ENCODE measurements at regions of chr6 and their contacts with region 1.

Region 1: DNA sequence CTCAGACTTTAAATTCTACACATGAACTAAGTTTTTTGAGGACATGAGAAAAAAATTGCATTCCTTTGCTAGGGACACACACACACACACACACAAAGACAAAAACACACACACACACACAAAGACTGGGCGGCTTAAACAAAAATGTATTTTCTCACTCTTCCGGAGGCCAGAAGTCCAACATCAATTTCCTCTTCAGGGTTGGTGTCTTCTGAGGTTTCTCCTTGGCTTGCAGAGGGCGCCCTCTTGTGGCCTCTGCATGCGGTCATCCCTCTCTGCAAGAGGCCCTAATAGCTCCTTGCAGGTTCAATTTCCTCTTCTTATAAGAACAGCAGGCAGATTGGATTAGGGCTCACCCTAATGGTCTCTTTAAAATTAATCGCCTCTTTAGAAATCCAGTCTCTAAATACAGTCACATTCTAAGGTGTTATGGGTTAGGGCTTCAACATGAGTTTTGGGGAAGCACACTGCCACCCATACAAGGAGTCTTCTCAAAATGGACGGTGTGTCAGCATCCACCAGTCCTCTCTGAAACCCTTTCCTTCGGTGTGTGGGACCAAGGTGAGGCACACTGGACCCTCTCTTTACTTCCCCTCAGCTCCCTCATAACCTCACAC is 61.4 kb downstream of the GPR6 start:
- ATAC-seq: peak; percentile 82 to 97 (median 93)
- H3K4me3 ChIP-seq: no peak overlapping the region
- H3K27ac ChIP-seq: no peak overlapping the region
- H3K4me1 ChIP-seq: peaks cover 0 to 2% of the 10 kb centered on the region in 2 donors

Region 2: DNA sequence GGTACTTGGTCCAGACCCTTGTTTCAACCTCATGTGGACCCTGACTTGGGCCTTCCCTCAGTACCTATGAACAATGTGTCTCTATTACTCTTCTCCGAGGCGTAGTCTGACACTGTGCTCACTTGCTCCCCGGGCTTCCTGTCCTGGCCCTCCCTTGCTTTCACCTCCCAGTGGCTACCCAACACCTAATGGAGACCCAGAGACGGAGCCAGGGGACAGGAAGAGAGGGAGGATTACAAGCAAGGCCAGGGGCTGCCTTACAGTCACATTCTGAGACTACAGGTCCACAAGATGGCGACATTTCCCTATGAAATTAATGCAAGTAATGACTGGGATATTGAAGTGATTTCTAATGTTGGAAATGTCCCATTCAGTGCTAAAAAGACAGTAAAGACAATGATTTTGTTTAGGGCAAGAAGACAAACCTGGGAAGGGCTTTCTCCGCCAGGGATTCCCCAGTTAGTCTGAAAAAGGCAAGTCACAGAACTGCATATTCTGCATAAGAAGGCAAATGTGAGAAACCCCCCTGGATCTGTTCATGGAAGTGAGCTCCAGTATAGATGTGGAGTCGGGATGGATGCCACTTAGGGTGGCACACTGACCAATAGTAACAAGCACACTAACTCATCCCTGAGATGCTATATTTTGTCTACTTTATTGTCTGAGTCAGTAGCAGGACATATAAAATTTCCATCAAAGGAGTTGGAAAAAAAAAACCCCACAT is 512.4 kb before region 1 on chr6:
- in situ Hi-C with region 1: loop called in 1 of 9 experiments (anchors 25 kb)
- ATAC-seq: peak; percentile 58 to 96 (median 80)
- H3K4me3 ChIP-seq: no peak overlapping the region
- H3K27ac ChIP-seq: no peak overlapping the region
- H3K4me1 ChIP-seq: no peaks in the 10 kb centered on the region

Region 3: DNA sequence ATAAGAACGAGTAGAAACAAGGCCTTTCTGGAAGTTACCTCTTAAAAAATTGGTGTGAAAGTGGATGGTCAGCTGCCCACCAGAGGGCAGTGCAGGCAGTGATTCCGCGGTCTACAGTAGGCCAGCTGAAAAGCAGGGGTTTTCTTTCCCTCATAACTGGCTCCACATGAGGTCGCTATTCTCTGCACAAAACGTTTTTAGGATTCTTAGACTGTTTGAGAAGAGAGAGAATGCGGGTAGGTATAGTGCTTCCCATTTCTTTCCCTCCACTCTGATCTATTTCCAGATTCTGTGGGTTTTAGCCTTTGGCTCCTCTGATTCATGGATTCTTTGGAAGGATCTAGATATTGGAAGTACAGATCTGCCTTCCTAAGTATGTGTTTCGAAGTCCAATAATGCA is 334.2 kb before region 1 on chr6:
- in situ Hi-C with region 1: loop called in 7 of 9 experiments (anchors 5 to 25 kb)
- ATAC-seq: peak; percentile 95 to 100 (median 98)
- H3K4me3 ChIP-seq: no peak overlapping the region
- H3K27ac ChIP-seq: no peak overlapping the region
- H3K4me1 ChIP-seq: no peaks in the 10 kb centered on the region

Region 4: DNA sequence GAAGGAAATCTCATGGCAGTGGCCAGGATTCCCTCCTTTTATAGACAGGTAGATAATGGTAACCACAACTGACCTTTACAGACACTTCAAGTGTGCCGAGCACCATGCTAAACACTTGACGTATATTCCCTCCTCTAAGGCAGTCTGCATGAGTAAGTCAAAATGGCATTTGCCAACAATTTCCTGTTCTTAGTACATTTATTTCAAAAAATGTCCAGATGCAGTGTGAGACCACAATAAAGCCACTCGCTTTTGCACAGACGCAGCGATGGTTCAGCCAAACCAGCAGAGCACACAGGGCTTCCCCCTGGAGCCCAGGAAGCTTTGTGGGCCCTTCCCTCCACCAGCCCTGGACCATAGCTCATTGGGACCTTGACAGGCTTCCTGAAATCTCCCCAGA is 77.8 kb before region 1 on chr6:
- in situ Hi-C with region 1: no loop called
- ATAC-seq: no peak
- H3K4me3 ChIP-seq: no peak overlapping the region
- H3K27ac ChIP-seq: no peak overlapping the region
- H3K4me1 ChIP-seq: no peaks in the 10 kb centered on the region

Region 5: DNA sequence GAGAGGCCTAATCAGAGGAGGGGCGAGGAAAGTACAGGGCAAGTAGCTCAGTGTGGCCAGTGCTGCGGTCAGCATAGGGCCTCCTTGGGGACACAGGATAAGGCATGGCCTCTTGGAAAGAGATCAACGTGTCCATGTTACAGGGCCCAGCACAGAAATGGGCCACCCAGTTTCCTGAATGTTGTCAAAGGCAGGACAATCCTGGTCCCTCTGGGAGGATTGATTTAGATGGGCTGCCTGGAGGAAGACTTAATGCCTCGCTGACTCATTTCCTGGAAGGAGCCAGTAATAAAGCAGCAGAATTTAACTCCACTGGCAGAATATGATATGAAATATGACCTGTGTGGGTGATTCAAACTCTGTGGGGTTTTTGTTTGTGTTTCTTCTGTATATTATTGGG is 359.3 kb after region 1 on chr6:
- in situ Hi-C with region 1: loop called in 1 of 9 experiments (anchors 25 kb)
- ATAC-seq: peak in 3 of 8 experiments; percentile 23 to 41 (median 36)
- H3K4me3 ChIP-seq: no peak overlapping the region
- H3K27ac ChIP-seq: no peak overlapping the region
- H3K4me1 ChIP-seq: peaks cover 0 to 3% of the 10 kb centered on the region in 2 donors

Region 6: GRCh38 chr6:110589865-110590513 is 550.5 kb after region 1 on chr6:
- in situ Hi-C with region 1: no loop called
- ATAC-seq: no peak
- H3K4me3 ChIP-seq: no peak overlapping the region
- H3K27ac ChIP-seq: no peak overlapping the region
- H3K4me1 ChIP-seq: no peaks in the 10 kb centered on the region

Measured in motor neuron (in vitro differentiated cells).